ENCODE measurements at regions of chr12 and their contacts with region 1.

Region 1: DNA sequence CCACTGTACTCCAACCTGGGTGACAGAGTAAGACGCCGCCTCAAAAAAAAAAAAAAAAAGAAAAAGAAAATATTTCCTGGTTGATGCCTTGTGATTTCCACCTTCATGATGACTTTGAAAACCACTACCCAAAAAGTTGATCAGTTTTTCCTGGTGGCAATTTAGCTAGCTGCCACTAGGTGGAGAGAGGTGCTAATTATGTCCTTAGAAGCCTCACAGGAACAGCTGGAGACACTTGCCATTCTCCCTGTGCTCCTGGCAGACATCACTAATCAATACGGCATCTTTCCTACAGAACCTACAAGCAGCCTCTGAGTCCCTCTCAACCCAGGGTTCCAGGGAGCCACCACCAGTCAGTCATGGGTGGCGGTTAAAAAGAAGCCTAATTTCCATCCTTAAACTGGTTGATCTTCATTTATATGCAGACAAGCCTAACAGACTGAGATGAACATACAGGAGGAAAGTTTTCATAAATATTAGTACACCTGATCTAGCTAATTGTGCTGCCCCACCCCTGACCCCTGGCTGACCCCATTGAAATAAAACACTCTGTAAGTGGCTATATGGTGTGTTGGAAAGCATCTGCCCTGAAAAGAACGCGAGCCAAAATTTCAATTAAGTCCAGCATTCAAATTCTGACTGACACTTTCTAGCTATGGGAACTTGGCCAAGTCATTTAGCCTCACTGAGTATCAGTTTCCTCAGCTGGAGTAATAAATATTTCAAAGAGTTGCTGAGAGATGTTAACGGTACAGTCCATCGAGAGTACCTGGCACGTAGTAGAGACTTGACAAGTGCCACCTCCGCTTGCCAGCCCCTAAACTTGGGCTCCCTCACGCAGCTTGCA is 6.2 kb upstream of the OAS1 start:
- DNase-seq: peak; percentile 48
- H3K4me3 ChIP-seq: no peak overlapping the region
- H3K27ac ChIP-seq: no peak overlapping the region
- H3K4me1 ChIP-seq: peaks cover under 1% of the 10 kb centered on the region
- H3K27me3 ChIP-seq: peaks cover 3% of the 10 kb centered on the region
- CTCF ChIP-seq: peak; percentile 79 to 80

Region 2: GRCh38 chr12:112937741-112938719 is 37.5 kb after region 1 on chr12 and contains the start of gene OAS3:
- CTCF ChIA-PET with region 1: no interaction called
- dilution Hi-C with region 1: no loop called
- in situ Hi-C with region 1: no loop called
- intact Hi-C with region 1: loop called (anchors 2 kb)
- DNase-seq: peak; percentile 79
- H3K4me3 ChIP-seq: peak within 1 kb of the TSS; percentile 60 to 85 (median 66)
- H3K27ac ChIP-seq: peak within 1 kb of the TSS; percentile 82
- H3K4me1 ChIP-seq: peaks cover 38% of the 10 kb centered on the region
- H3K27me3 ChIP-seq: no peaks in the 10 kb centered on the region
- CTCF ChIP-seq: no peak
- total RNA-seq, gene OAS3: 3.3 to 23.9 TPM

Region 3: DNA sequence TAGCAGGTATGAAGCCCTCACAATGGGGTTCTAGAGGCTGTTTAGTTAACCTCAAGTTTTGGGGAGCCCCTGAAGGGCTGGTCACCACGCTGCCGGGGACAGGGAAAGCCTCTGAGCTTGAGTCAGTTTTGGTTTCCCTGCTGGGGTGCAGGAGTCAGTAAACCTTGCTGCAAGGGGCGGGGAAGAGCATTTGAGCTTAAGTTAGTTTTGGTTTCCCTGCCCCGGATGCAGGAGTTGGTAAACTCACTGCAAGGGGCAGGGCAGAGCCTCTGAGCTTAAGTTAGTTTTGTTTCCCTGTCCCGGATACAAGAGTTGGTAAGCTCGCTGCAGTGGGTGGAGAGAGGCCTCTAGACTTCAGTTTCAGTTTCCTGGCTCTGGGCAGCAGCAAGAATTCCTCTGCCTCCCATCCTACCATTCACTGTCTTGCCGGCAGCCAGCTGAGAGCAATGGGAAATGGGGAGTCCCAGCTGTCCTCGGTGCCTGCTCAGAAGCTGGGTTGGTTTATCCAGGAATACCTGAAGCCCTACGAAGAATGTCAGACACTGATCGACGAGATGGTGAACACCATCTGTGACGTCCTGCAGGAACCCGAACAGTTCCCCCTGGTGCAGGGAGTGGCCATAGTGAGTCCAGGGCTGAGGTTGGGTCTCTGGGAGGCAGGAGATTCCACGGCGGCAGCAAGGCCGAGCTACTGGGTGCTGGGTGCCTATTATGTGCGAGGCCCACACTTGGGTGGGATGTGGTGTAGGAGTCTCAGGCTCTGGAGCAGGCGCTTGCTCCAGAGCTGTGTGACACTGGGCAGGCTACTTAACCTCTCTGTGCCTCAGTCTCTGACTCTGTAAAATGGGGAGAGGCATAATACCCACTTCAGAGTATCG is 77.9 kb after region 1 on chr12 and contains the start of gene OAS2:
- CTCF ChIA-PET with region 1: no interaction called
- dilution Hi-C with region 1: no loop called
- in situ Hi-C with region 1: loop called in 1 of 2 experiments (anchors 10 kb)
- intact Hi-C with region 1: loop called (anchors 2 kb)
- DNase-seq: peak; percentile 71
- H3K4me3 ChIP-seq: peak within 1 kb of the TSS; percentile 10 to 34 (median 13)
- H3K27ac ChIP-seq: no peak within 1 kb of the TSS
- H3K4me1 ChIP-seq: peaks cover 7% of the 10 kb centered on the region
- H3K27me3 ChIP-seq: no peaks in the 10 kb centered on the region
- CTCF ChIP-seq: no peak
- total RNA-seq, gene OAS2: 0.83 to 4.8 TPM

Region 4: DNA sequence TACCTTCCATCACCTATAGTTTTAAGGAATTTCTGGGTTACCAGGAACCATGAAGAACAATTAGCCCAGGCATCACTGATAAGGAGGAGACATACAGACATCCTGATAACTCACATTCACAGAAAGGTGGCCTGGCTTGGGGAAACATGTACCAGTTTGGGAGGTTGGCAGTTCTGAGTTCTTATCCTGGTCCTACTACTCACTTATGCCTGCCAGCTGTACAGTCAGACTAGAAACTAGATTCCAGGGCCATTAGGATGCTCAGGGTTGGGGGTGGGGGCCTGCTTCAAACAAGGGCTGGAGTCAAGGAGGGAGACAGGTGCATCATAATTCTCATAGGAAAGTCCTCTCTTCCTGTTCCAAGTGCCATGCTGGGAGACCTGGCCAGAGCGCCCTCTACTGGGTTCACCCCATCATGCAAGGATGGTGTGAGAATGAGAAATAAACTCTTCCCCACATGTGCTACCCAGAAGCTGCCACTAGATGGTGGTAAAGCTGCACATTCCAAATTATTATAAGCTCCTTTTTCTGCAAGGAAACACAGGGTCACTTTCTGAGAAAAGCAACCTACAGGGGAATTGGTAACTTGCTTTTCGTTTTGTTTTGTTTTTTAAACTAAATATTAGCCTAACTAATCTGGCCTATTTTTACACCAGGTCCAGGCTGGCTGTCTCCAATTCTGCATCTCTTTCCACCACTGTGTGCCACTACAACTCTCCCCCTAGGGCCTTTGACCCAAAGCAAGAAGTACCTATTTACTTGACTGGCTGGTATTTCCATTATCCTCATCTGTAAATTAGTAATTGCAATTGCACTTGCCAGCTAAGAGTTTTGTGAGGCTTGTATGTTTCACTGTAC is 92.2 kb after region 1 on chr12:
- CTCF ChIA-PET with region 1: interaction called, 22 read pairs
- dilution Hi-C with region 1: no loop called
- in situ Hi-C with region 1: loop called in 1 of 2 experiments (anchors 10 kb)
- intact Hi-C with region 1: loop called (anchors 1 kb)
- DNase-seq: peak; percentile 60
- H3K4me3 ChIP-seq: no peak overlapping the region
- H3K27ac ChIP-seq: no peak overlapping the region
- H3K4me1 ChIP-seq: no peaks in the 10 kb centered on the region
- H3K27me3 ChIP-seq: no peaks in the 10 kb centered on the region
- CTCF ChIP-seq: peak; percentile 93 to 99

Region 5: DNA sequence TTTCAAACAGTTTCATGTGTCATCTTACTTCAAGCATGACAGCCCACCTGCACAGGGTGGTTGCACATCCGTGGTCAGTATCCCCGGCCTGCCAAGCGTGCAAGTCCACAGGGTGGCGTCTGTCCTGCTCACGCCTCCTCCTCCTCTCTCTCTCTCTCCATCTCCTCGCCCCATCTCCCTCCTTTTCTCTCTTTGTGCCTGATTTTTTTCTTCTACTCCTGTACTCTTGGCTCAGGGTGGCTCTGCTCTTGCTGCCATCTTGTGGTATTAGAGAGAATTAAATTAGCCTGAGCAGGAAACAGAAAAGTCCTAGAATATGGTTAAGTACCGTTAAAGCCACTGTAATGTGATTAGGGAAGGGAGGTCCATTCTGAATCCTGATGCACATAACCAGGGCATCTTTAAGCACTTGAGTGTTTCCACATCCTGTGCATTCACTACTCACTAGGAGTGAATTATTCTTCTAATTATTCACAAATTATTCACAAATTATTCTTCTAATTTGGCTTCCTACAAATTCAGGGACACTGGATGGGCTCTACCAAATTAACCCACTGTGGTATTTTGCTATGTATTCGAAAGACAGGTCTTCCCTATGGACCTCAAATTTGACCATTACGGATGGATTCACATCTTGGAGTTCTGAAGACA is 130.5 kb after region 1 on chr12:
- CTCF ChIA-PET with region 1: no interaction called
- dilution Hi-C with region 1: no loop called
- in situ Hi-C with region 1: no loop called
- intact Hi-C with region 1: loop called (anchors 1 kb)
- DNase-seq: peak; percentile 66
- H3K4me3 ChIP-seq: no peak overlapping the region
- H3K27ac ChIP-seq: no peak overlapping the region
- H3K4me1 ChIP-seq: peaks cover 3% of the 10 kb centered on the region
- H3K27me3 ChIP-seq: no peaks in the 10 kb centered on the region
- CTCF ChIP-seq: peak; percentile 56 to 68

Region 6: GRCh38 chr12:113152835-113153814 is 252.6 kb after region 1 on chr12:
- CTCF ChIA-PET with region 1: interaction called, 4 read pairs
- dilution Hi-C with region 1: no loop called
- in situ Hi-C with region 1: no loop called
- intact Hi-C with region 1: loop called (anchors 2 kb)
- DNase-seq: peak; percentile 79
- H3K4me3 ChIP-seq: peak overlapping the region; percentile 46 to 60 (median 46)
- H3K27ac ChIP-seq: no peak overlapping the region
- H3K4me1 ChIP-seq: peaks cover 25% of the 10 kb centered on the region
- H3K27me3 ChIP-seq: no peaks in the 10 kb centered on the region
- CTCF ChIP-seq: peak; percentile 3 to 69

Region 7: GRCh38 chr12:113174461-113175384 is 274.2 kb after region 1 on chr12:
- CTCF ChIA-PET with region 1: no interaction called
- dilution Hi-C with region 1: no loop called
- in situ Hi-C with region 1: no loop called
- intact Hi-C with region 1: loop called (anchors 5 kb)
- DNase-seq: peak; percentile 27
- H3K4me3 ChIP-seq: no peak overlapping the region
- H3K27ac ChIP-seq: no peak overlapping the region
- H3K4me1 ChIP-seq: no peaks in the 10 kb centered on the region
- H3K27me3 ChIP-seq: no peaks in the 10 kb centered on the region
- CTCF ChIP-seq: peak; percentile 97 to 98